ENCODE measurements at regions of chr3 and their contacts with region 1.

Region 1: GRCh38 chr3:81769299-81769698 is 7.9 kb upstream of the GBE1 start:
- DNase-seq: no peak
- H3K4me3 ChIP-seq: no peak overlapping the region
- H3K27ac ChIP-seq: no peak overlapping the region
- H3K4me1 ChIP-seq: no peaks in the 10 kb centered on the region
- H3K27me3 ChIP-seq: no peaks in the 10 kb centered on the region
- CTCF ChIP-seq: no peak
- EP300 ChIP-seq: no peak
- POLR2A ChIP-seq: no peak

Region 2: GRCh38 chr3:81612768-81613167 is 156.5 kb before region 1 on chr3:
- intact Hi-C with region 1: no loop called
- DNase-seq: no peak
- H3K4me3 ChIP-seq: no peak overlapping the region
- H3K27ac ChIP-seq: no peak overlapping the region
- H3K4me1 ChIP-seq: no peaks in the 10 kb centered on the region
- H3K27me3 ChIP-seq: no peaks in the 10 kb centered on the region
- CTCF ChIP-seq: no peak
- EP300 ChIP-seq: no peak
- POLR2A ChIP-seq: no peak

Region 3: DNA sequence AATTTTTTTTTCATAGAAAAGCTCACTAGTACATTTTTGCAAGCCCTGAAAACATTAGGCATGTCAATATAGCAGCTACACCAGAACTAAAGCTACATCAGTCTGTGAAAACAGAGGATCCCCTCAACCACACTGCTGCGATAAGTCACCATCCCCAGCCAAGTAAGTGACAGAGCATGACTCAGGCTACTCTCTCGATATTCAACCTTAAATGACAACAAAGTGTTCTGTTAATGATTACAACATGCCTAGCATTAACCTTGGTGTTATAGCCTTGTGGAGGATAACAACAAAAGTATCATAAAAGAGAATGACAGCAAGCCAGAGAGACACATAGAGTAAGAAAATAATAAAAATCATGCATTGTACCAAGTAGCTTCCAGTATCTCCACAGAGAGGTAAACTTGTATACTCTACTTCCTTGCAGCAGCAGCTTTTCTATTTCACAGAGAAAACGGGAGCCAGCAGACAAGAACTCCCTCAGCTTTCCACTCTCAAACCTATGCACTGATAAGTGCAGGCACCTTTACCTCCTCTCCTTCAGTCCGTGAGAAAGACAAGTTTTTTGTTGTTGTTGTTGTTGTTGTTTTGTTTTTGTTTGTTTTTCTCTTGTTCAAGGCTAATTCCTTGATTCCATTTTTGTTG is 84.4 kb before region 1 on chr3:
- intact Hi-C with region 1: loop called in 1 of 4 experiments (anchors 1 kb)
- DNase-seq: no peak
- H3K4me3 ChIP-seq: no peak overlapping the region
- H3K27ac ChIP-seq: no peak overlapping the region
- H3K4me1 ChIP-seq: no peaks in the 10 kb centered on the region
- H3K27me3 ChIP-seq: no peaks in the 10 kb centered on the region
- CTCF ChIP-seq: no peak
- EP300 ChIP-seq: no peak
- POLR2A ChIP-seq: no peak

Region 4: GRCh38 chr3:82058809-82059208 is 289.5 kb after region 1 on chr3:
- intact Hi-C with region 1: no loop called
- DNase-seq: no peak
- H3K4me3 ChIP-seq: no peak overlapping the region
- H3K27ac ChIP-seq: no peak overlapping the region
- H3K4me1 ChIP-seq: no peaks in the 10 kb centered on the region
- H3K27me3 ChIP-seq: no peaks in the 10 kb centered on the region
- CTCF ChIP-seq: no peak
- EP300 ChIP-seq: no peak
- POLR2A ChIP-seq: no peak